ENCODE measurements at regions of chr7 and their contacts with region 1.

Region 1: GRCh38 chr7:98133181-98133580 is 26.5 kb downstream of the LMTK2 start:
- DNase-seq: peak; percentile 17 to 83
- H3K4me3 ChIP-seq: peak overlapping the region; percentile 45; the same call in 1 of the 2 replicates
- H3K27ac ChIP-seq: peak overlapping the region; percentile 100
- H3K4me1 ChIP-seq: peaks cover 73% of the 10 kb centered on the region
- H3K27me3 ChIP-seq: no peaks in the 10 kb centered on the region
- CTCF ChIP-seq: no peak

Region 2: GRCh38 chr7:98021588-98022351 is 111.4 kb before region 1 on chr7:
- CTCF ChIA-PET with region 1: interaction called, 13 read pairs
- POLR2A ChIA-PET with region 1: interaction called, 13 read pairs
- intact Hi-C with region 1: no loop called
- DNase-seq: peak; percentile 55 to 85
- H3K4me3 ChIP-seq: no peak overlapping the region
- H3K27ac ChIP-seq: no peak overlapping the region
- H3K4me1 ChIP-seq: no peaks in the 10 kb centered on the region
- H3K27me3 ChIP-seq: no peaks in the 10 kb centered on the region
- CTCF ChIP-seq: peak; percentile 94

Region 3: GRCh38 chr7:98086281-98086718 is 46.9 kb before region 1 on chr7:
- CTCF ChIA-PET with region 1: no interaction called
- POLR2A ChIA-PET with region 1: interaction called, 15 read pairs
- intact Hi-C with region 1: loop called (anchors 5 kb)
- DNase-seq: peak; percentile 95 to 98
- H3K4me3 ChIP-seq: peak overlapping the region; percentile 11; the same call in 1 of the 2 replicates
- H3K27ac ChIP-seq: peak overlapping the region; percentile 94
- H3K4me1 ChIP-seq: peaks cover 51% of the 10 kb centered on the region
- H3K27me3 ChIP-seq: no peaks in the 10 kb centered on the region
- CTCF ChIP-seq: no peak

Region 4: GRCh38 chr7:98106647-98107445 is 26.3 kb before region 1 on chr7 and contains the start of gene LMTK2:
- CTCF ChIA-PET with region 1: interaction called, 3 read pairs
- POLR2A ChIA-PET with region 1: interaction called, 4 read pairs
- intact Hi-C with region 1: loop called (anchors 2 kb)
- DNase-seq: peak; percentile 69 to 98
- H3K4me3 ChIP-seq: peak within 1 kb of the TSS; percentile 76
- H3K27ac ChIP-seq: peak within 1 kb of the TSS; percentile 54
- H3K4me1 ChIP-seq: peaks cover 40% of the 10 kb centered on the region
- H3K27me3 ChIP-seq: no peaks in the 10 kb centered on the region
- CTCF ChIP-seq: peak; percentile 84
- total RNA-seq, gene LMTK2: 33.3 and 37.1 TPM in 2 replicates

Region 5: DNA sequence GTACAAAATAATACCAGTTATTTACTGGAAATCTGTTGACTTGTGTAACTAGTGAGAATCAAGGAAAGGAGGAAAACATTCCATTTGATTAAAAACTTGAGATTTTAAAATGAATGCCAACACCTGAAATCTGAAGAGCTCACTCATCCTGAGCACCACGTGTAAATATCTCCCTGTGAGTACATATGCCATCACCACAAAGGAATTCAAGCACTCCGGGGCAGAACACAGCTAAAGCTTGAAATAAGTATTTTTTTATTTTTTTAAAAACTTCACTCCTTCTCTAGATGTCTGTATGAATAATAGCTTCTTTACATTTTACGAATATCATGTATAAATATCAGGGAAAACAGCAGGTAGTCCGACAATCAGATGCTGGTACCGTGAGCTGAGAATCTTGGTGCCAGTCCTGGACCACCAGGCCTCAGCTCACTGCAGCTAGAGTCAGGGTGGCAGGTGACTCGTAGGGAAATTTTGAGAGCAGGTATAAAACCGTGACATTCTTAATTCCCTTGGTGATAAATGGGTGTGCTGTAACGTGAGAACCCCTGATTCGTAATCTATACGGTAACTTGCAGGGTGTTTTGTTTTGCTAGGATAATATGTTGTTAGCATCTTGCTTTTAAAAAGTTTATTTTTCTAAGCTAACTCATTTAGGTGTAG is 13.8 kb before region 1 on chr7:
- CTCF ChIA-PET with region 1: interaction called, 16 read pairs
- POLR2A ChIA-PET with region 1: interaction called, 9 read pairs
- intact Hi-C with region 1: loop called (anchors 1 kb)
- DNase-seq: peak; percentile 43 to 87
- H3K4me3 ChIP-seq: peak overlapping the region; percentile 31; the same call in 1 of the 2 replicates
- H3K27ac ChIP-seq: peak overlapping the region; percentile 87
- H3K4me1 ChIP-seq: peaks cover 64% of the 10 kb centered on the region
- H3K27me3 ChIP-seq: no peaks in the 10 kb centered on the region
- CTCF ChIP-seq: no peak

Region 6: DNA sequence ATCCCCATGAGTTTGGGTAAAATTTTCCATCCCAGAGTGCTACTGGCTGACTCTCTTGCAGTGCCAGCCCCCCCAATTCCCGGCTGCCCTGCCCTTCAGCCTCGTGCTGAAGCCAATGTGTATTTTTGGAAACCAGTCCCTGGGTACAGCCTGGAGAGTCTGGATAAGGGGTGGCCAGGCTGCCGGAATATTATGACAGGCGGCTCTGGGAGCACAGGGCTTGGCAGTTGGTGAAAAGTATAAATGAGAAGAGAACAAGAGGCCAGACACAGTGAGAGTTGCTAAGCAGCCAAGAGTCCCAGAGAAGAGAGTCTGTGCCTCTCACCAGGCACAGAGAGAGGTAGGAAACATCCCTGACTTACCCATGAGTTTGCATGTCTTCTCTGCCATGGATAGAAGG is 683.1 kb after region 1 on chr7:
- CTCF ChIA-PET with region 1: no interaction called
- POLR2A ChIA-PET with region 1: interaction called, 20 read pairs
- intact Hi-C with region 1: no loop called
- DNase-seq: no peak
- H3K4me3 ChIP-seq: no peak overlapping the region
- H3K27ac ChIP-seq: no peak overlapping the region
- H3K4me1 ChIP-seq: no peaks in the 10 kb centered on the region
- H3K27me3 ChIP-seq: peaks cover 6% of the 10 kb centered on the region
- CTCF ChIP-seq: no peak

Measured in PC-9 (cell line).